MCF 10A (cell line): ENCODE measurements at regions of chr3 and their contacts with region 1.

Region 1: DNA sequence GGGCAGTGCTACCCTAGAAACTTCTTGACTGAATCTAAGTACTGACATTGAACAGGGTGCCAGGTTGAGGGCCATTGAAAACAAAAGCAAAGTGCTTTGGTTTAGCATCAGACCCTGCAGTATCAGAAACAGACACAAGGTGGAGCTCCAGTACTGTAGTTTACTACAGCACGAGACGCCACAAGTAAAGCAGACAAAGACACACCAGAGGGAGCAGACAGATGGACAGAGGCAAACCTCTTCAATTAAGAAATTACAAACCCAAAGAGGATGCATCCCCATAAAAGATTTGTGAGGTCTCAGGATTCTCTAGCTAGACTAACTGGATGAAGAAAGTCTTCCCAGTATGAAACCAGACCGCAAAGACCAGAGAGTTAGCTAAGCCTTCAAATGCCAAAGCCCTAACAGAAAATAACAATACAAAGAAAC is 16.6 kb downstream of the TOP2B start:
- DNase-seq: peak; percentile 85
- H3K4me3 Mint-ChIP-seq: no peak overlapping the region
- H3K27ac Mint-ChIP-seq: no peak overlapping the region
- H3K4me1 Mint-ChIP-seq: peaks cover 15% of the 10 kb centered on the region
- H3K27me3 Mint-ChIP-seq: no peaks in the 10 kb centered on the region
- CTCF ChIP-seq: peak; percentile 86

Region 2: GRCh38 chr3:25156626-25157025 is 491.5 kb before region 1 on chr3:
- CTCF ChIA-PET with region 1: no interaction called
- POLR2A ChIA-PET with region 1: no interaction called
- intact Hi-C with region 1: no loop called
- DNase-seq: peak; percentile 57
- H3K4me3 Mint-ChIP-seq: no peak overlapping the region
- H3K27ac Mint-ChIP-seq: no peak overlapping the region
- H3K4me1 Mint-ChIP-seq: peaks cover 13% of the 10 kb centered on the region
- H3K27me3 Mint-ChIP-seq: no peaks in the 10 kb centered on the region
- CTCF ChIP-seq: no peak

Region 3: GRCh38 chr3:25664810-25665314 is 16.7 kb after region 1 on chr3 and contains the start of gene TOP2B:
- CTCF ChIA-PET with region 1: interaction called, 57 read pairs
- POLR2A ChIA-PET with region 1: interaction called, 4 read pairs
- intact Hi-C with region 1: no loop called
- DNase-seq: peak; percentile 95
- H3K4me3 Mint-ChIP-seq: peak within 1 kb of the TSS; percentile 99
- H3K27ac Mint-ChIP-seq: peak within 1 kb of the TSS; percentile 96
- H3K4me1 Mint-ChIP-seq: peaks cover 23% of the 10 kb centered on the region
- H3K27me3 Mint-ChIP-seq: no peaks in the 10 kb centered on the region
- CTCF ChIP-seq: no peak
- total RNA-seq, gene TOP2B: 77.8 and 88.7 TPM in 2 replicates

Region 4: GRCh38 chr3:25782938-25783660 is 135.0 kb after region 1 on chr3 and contains the start of gene NGLY1:
- CTCF ChIA-PET with region 1: interaction called, 14 read pairs
- POLR2A ChIA-PET with region 1: interaction called, 10 read pairs
- intact Hi-C with region 1: loop called (anchors 5 kb)
- DNase-seq: peak; percentile 75
- H3K4me3 Mint-ChIP-seq: peak within 1 kb of the TSS; percentile 84
- H3K27ac Mint-ChIP-seq: peak within 1 kb of the TSS; percentile 31
- H3K4me1 Mint-ChIP-seq: peaks cover 26% of the 10 kb centered on the region
- H3K27me3 Mint-ChIP-seq: no peaks in the 10 kb centered on the region
- CTCF ChIP-seq: no peak
- total RNA-seq, gene NGLY1: 36.6 and 45.4 TPM in 2 replicates

Region 5: GRCh38 chr3:25831578-25831977 is 183.5 kb after region 1 on chr3:
- CTCF ChIA-PET with region 1: interaction called, 17 read pairs
- POLR2A ChIA-PET with region 1: no interaction called
- intact Hi-C with region 1: loop called (anchors 1 kb)
- DNase-seq: peak; percentile 29
- H3K4me3 Mint-ChIP-seq: no peak overlapping the region
- H3K27ac Mint-ChIP-seq: no peak overlapping the region
- H3K4me1 Mint-ChIP-seq: no peaks in the 10 kb centered on the region
- H3K27me3 Mint-ChIP-seq: no peaks in the 10 kb centered on the region
- CTCF ChIP-seq: no peak

Region 6: DNA sequence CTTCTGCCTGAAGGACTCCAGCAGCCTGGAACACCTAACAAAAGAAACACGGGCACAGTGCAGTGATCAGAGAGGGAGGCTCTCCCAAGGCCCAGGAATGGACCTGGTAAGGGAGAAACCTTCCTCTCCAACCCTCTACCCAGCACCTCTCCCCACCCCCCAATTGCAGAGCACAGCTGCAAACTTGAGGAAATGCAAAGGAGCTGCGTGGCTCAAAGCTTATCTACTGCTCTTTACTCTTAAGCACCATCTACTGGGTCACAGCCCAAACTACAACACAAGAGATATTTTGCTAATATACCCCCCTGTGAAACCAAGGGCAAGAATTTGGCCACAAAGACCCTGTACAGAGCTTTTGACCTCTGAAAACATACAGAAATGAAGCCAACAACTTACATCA is 470.0 kb after region 1 on chr3:
- CTCF ChIA-PET with region 1: interaction called, 17 read pairs
- POLR2A ChIA-PET with region 1: no interaction called
- intact Hi-C with region 1: loop called (anchors 5 kb)
- DNase-seq: peak; percentile 4
- H3K4me3 Mint-ChIP-seq: no peak overlapping the region
- H3K27ac Mint-ChIP-seq: no peak overlapping the region
- H3K4me1 Mint-ChIP-seq: no peaks in the 10 kb centered on the region
- H3K27me3 Mint-ChIP-seq: no peaks in the 10 kb centered on the region
- CTCF ChIP-seq: peak; percentile 51